ENCODE measurements at regions of chr11 and their contacts with region 1.

Region 1: DNA sequence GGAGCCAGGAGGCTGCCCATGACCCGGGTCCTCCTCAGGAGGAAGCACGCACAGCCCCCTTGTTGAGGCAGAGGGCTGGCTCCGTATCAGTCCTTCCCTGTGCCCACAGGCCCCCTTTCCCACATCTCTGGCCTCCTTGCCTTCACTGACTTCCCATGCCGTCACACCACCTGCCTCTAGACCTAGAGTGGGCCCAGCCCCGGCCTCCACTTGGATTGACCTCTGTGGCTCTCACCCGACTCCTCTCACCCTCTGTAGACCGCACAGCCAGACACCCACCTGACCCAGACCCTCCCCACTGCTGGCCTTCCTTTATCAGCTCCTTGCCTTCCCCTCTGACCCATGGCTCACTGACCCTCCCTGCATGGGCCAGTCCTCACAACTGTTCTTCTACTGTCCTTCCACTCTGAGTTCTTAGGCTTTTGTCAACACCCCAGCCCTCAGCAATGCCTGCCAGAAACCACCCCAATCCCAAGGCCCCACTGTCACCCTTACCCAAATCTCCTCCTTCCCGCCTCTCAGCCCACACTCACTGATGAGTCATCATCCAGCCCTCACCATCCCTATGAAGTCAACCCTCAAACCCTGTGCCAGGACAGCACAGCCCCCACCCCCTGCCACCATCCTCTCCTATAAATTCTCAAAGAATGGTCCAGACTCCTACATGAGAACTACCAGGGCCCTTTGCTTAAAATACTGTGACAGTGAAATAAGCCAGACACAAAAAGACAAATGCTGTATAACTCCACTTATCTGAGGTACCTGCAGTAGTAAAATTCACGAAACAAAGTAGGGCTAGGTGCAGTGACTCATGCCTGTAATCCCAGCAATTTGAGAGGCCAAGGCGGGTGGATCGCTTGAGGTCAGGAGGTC is 53.4 kb downstream of the SCGB1A1 start:
- DNase-seq: peak; percentile 96
- H3K4me3 ChIP-seq: no peak overlapping the region
- H3K27ac ChIP-seq: peak overlapping the region; percentile 65 to 90 (median 85)
- H3K4me1 ChIP-seq: peaks cover 0 to 37% (median 26%) of the 10 kb centered on the region in 4 donors
- H3K27me3 ChIP-seq: no peaks in the 10 kb centered on the region
- CTCF ChIP-seq: no peak
- EP300 ChIP-seq: peak; percentile 92 to 98 (median 97)
- POLR2A ChIP-seq: no peak

Region 2: DNA sequence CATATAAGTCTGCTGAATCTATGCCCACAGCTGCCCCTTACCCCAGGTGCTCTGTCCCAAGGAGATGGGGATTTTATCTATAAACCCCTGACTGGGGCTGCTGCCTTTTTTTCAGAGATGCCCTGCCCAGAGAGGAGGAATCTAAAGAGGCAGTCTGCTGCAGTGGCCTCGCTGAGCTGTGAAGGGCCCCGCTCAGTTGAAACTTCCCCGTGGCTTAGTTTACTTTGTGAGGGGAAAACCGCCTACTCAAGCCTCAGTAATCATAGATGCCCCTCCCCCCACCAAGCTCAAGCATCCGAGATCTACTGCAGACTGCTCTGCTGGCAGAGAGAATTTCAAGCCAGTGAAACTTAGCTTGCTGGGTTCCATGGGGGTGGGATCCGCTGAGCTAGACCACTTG is 166.0 kb before region 1 on chr11:
- intact Hi-C with region 1: no loop called
- DNase-seq: no peak
- H3K4me3 ChIP-seq: no peak overlapping the region
- H3K27ac ChIP-seq: no peak overlapping the region
- H3K4me1 ChIP-seq: peaks cover 0 to 5% (median 0%) of the 10 kb centered on the region in 4 donors
- H3K27me3 ChIP-seq: peaks cover 0 to 17% (median 0%) of the 10 kb centered on the region in 3 donors
- CTCF ChIP-seq: no peak
- EP300 ChIP-seq: no peak
- POLR2A ChIP-seq: no peak

Region 3: GRCh38 chr11:62427630-62428233 is 44.5 kb before region 1 on chr11:
- intact Hi-C with region 1: loop called (anchors 5 kb)
- DNase-seq: no peak
- H3K4me3 ChIP-seq: no peak overlapping the region
- H3K27ac ChIP-seq: peak overlapping the region; percentile 43 to 81 (median 79)
- H3K4me1 ChIP-seq: peaks cover 0 to 96% (median 81%) of the 10 kb centered on the region in 4 donors
- H3K27me3 ChIP-seq: no peaks in the 10 kb centered on the region
- CTCF ChIP-seq: no peak
- EP300 ChIP-seq: peak in 1 of 4 donors; percentile 34
- POLR2A ChIP-seq: no peak

Region 4: DNA sequence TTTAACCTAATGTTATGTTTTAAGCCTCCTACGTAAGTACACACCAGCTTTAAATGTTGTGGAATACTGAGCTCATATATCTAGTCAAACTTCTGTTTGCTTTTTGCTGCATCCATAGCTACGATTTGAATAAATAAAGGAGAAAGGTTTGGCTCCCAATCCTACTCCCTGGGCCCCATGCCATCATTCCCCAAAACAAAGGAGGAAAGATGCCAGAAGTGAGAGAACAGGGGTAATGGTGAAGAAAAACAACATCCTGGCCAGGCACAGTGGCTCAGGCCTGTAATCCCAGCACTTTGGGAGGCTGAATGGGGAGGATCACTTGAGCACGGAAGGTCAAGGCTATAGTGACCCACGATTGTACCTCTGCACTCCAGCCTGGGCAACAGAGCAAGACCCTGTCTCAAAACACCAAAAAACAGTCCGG is 26.9 kb before region 1 on chr11:
- intact Hi-C with region 1: loop called (anchors 1 kb)
- DNase-seq: peak; percentile 91
- H3K4me3 ChIP-seq: peak overlapping the region in 3 of 4 donors; percentile 39 to 51 (median 48)
- H3K27ac ChIP-seq: peak overlapping the region; percentile 89 to 96 (median 93)
- H3K4me1 ChIP-seq: peaks cover 0 to 51% (median 45%) of the 10 kb centered on the region in 4 donors
- H3K27me3 ChIP-seq: no peaks in the 10 kb centered on the region
- CTCF ChIP-seq: no peak
- EP300 ChIP-seq: peak in 3 of 4 donors; percentile 20 to 90 (median 80)
- POLR2A ChIP-seq: no peak

Region 5: GRCh38 chr11:62508268-62509058 is 36.2 kb after region 1 on chr11:
- intact Hi-C with region 1: loop called (anchors 2 kb)
- DNase-seq: peak; percentile 96
- H3K4me3 ChIP-seq: peak overlapping the region in 3 of 4 donors; percentile 18 to 23 (median 19)
- H3K27ac ChIP-seq: peak overlapping the region; percentile 83 to 89 (median 88)
- H3K4me1 ChIP-seq: peaks cover 0 to 87% (median 76%) of the 10 kb centered on the region in 4 donors
- H3K27me3 ChIP-seq: no peaks in the 10 kb centered on the region
- CTCF ChIP-seq: peak; percentile 33 to 72 (median 56)
- EP300 ChIP-seq: peak in 1 of 4 donors; percentile 83
- POLR2A ChIP-seq: peak in 1 of 2 donors; percentile 36

Measured in sigmoid colon (tissue), 7 donors.